Activated CD4-positive, alpha-beta T cell treated with anti-CD3 and anti-CD28 coated beads for 36 hours (primary cell): ENCODE measurements at regions of chr3 and their contacts with region 1.

Region 1: GRCh38 chr3:24773798-24774197 is 279.1 kb upstream of the THRB start:
- DNase-seq: peak; percentile 61
- ATAC-seq: no peak
- H3K4me3 Mint-ChIP-seq: no peak overlapping the region
- H3K27ac Mint-ChIP-seq: no peak overlapping the region
- H3K4me1 Mint-ChIP-seq: no peaks in the 10 kb centered on the region
- H3K27me3 Mint-ChIP-seq: no peaks in the 10 kb centered on the region

Region 2: DNA sequence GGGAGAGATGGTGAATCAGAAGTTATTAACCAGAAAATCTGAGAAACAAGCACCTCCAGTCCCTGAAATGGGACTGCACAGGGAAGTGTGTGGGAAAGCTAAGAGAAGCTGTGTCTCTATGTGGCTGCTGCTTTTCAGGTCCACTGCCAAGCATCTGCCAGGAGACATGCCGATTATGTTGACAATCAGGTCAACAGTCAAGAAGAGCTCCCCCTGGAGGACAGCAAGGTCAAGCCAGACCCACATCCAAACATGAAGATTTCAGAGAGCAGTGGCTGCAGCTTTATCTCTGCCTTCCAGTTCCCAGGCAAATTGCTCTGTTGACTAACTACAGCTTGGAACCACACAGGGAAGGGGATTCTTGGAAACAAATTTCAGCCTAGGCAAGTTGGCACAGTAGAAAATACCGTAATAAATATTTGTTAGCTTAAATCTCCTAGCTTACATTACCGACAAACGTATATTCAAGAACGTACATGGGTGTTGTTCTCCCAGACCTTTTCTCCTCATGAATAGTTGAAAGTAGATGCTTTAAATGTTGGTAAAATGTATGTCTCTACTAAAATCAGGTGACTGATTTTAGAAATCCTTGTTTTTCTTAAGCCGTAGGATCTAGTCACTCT is 259.7 kb after region 1 on chr3:
- CTCF ChIA-PET with region 1: no interaction called
- POLR2A ChIA-PET with region 1: no interaction called
- intact Hi-C with region 1: loop called (anchors 1 to 5 kb)
- DNase-seq: peak; percentile 39
- ATAC-seq: peak; percentile 39
- H3K4me3 Mint-ChIP-seq: no peak overlapping the region
- H3K27ac Mint-ChIP-seq: no peak overlapping the region
- H3K4me1 Mint-ChIP-seq: no peaks in the 10 kb centered on the region
- H3K27me3 Mint-ChIP-seq: no peaks in the 10 kb centered on the region

Region 3: DNA sequence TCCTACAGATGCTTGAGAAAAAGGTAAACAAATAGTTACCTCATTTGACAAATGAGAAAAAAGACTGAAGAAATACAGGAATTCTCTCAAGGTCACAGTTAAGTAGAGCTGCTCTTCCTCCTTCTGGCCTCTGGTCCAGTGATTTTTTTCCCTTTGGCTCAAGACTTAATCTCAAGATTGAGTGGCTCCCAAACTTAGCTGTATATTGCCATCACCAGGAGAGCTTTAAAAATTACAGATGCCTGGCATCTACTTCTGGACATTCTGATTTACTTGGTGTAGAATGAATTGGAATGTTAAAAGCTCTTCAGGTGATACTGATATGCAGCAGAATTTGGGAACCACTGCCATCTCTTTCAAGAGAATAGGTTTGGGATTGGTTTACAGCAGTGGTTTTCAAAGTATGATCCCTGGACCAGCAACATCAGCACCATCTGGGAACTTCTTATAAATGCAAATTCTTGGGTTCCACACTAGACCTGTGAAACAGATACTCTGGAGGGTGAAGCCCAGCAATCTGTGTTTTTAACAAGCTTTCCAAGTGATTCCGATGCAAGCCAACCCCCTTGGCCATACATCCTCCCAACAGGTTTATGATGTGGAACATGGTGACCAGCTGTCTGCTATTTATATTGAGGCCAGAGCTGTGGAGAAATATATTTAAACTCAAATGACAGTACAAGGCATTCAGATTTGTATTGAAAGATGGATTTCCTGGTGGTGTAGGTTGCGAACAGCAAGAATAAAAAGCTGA is 321.3 kb after region 1 on chr3:
- CTCF ChIA-PET with region 1: no interaction called
- POLR2A ChIA-PET with region 1: no interaction called
- intact Hi-C with region 1: no loop called
- DNase-seq: no peak
- ATAC-seq: no peak
- H3K4me3 Mint-ChIP-seq: no peak overlapping the region
- H3K27ac Mint-ChIP-seq: no peak overlapping the region
- H3K4me1 Mint-ChIP-seq: no peaks in the 10 kb centered on the region
- H3K27me3 Mint-ChIP-seq: no peaks in the 10 kb centered on the region